ENCODE measurements at regions of chr16 and their contacts with region 1.

Region 1: GRCh38 chr16:74726716-74727115 is 26.1 kb upstream of the MLKL start:
- DNase-seq: no peak
- ATAC-seq: no peak
- H3K4me3 ChIP-seq: no peak overlapping the region
- H3K27ac ChIP-seq: no peak overlapping the region
- H3K4me1 ChIP-seq: no peaks in the 10 kb centered on the region
- H3K27me3 ChIP-seq: peaks cover 0 to 11% (median 0%) of the 10 kb centered on the region in 9 donors
- CTCF ChIP-seq: peak in 7 of 12 donors; percentile 6 to 37 (median 16)
- POLR2A ChIP-seq: no peak

Region 2: DNA sequence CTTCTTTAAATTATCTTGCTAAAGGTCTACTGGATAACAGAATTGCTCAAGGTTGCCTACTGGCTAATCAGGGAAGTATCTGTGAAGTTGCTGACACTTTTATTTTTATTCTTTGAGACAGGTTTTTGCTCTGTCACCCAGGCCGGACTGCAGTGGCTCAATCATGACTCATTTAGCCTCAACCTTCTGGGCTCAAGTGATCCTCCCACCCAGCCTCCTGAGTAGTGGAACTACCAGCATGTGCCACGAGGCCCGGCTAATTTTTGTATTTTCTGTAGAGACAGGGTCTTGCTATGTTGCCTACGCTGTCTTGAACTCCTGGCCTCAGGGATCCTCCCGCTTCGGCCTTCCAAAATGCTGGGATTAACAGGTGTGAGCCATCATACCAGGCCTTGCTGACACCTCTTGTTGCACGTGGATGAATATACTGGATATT is 162.9 kb before region 1 on chr16:
- intact Hi-C with region 1: no loop called
- DNase-seq: peak in 1 of 5 donors; percentile 34
- ATAC-seq: peak in 2 of 4 donors; percentile 49 to 61
- H3K4me3 ChIP-seq: no peak overlapping the region
- H3K27ac ChIP-seq: no peak overlapping the region
- H3K4me1 ChIP-seq: peaks cover 0 to 62% (median 12%) of the 10 kb centered on the region in 12 donors
- H3K27me3 ChIP-seq: no peaks in the 10 kb centered on the region
- CTCF ChIP-seq: no peak
- POLR2A ChIP-seq: no peak

Region 3: GRCh38 chr16:74852500-74852875 is 125.8 kb after region 1 on chr16:
- intact Hi-C with region 1: loop called in 1 of 10 experiments (anchors 5 kb)
- DNase-seq: no peak
- ATAC-seq: no peak
- H3K4me3 ChIP-seq: no peak overlapping the region
- H3K27ac ChIP-seq: no peak overlapping the region
- H3K4me1 ChIP-seq: no peaks in the 10 kb centered on the region
- H3K27me3 ChIP-seq: no peaks in the 10 kb centered on the region
- CTCF ChIP-seq: no peak
- POLR2A ChIP-seq: no peak

Region 4: GRCh38 chr16:74909366-74910064 is 182.8 kb after region 1 on chr16:
- intact Hi-C with region 1: no loop called
- DNase-seq: no peak
- ATAC-seq: no peak
- H3K4me3 ChIP-seq: no peak overlapping the region
- H3K27ac ChIP-seq: no peak overlapping the region
- H3K4me1 ChIP-seq: no peaks in the 10 kb centered on the region
- H3K27me3 ChIP-seq: no peaks in the 10 kb centered on the region
- CTCF ChIP-seq: no peak
- POLR2A ChIP-seq: no peak

Measured in heart left ventricle (tissue), 16 donors.